Activated CD4-positive, alpha-beta T cell treated with anti-CD3 and anti-CD28 coated beads for 36 hours (primary cell): ENCODE measurements at regions of chr6 and their contacts with region 1.

Region 1: DNA sequence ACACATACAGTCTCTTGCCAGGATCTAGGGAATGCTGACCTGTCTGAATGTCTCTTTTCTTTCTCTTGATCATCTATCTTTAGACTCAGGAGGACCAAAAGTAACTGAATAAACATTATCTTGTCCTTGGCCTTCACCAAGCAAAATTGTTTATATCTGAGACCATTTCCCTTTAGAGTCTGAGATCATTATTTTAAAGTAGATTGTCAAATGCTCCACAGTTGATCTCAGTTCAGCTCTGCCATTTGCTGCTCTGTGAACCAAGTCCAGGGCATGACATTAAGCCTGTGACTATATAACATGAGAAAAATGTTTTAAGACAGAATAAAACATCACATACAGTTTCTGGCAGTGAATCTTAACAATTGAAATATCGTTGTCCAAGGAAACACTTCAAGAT is 148.3 kb upstream of the NRSN1 start:
- DNase-seq: no peak
- ATAC-seq: no peak
- H3K4me3 Mint-ChIP-seq: no peak overlapping the region
- H3K27ac Mint-ChIP-seq: no peak overlapping the region
- H3K4me1 Mint-ChIP-seq: no peaks in the 10 kb centered on the region
- H3K27me3 Mint-ChIP-seq: peaks cover 1% of the 10 kb centered on the region

Region 2: DNA sequence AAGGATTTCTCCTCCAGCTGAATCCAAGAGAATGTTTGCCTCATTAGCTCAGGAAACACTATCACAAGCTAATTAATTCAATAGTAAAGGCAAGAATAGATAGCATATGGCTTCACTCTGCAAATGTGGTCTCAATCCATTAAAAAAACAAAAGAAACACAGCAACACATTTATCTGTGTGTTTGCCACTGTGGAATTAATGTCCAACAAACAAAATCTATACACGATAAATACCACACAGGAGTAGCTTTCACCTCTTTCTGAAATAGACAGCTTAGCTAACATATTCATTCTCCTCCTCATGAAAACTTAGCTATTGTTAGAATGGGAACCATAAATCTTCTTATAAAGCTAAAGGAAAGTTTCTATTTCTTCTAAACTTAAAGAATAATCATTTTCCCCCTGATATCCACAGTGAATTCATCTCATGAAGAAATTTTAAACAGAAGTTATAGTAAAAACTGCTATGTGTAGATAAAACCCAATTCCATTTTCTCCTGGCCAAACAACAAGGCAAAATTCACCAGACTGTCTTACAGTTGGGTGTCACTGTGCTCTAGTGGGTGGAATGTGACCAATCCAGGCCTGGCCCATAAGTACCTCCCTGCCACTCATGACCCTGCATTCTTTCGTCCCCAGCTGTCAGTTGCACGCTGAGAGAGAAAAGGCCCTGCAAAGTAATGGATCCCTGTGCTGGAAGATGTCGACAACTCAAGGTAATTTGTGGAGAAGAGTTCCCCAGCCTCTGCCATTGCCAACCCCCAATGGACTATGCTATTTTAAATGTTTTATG is 55.4 kb after region 1 on chr6:
- CTCF ChIA-PET with region 1: no interaction called
- POLR2A ChIA-PET with region 1: no interaction called
- intact Hi-C with region 1: loop called in 1 of 2 experiments (anchors 10 kb)
- DNase-seq: no peak
- ATAC-seq: no peak
- H3K4me3 Mint-ChIP-seq: no peak overlapping the region
- H3K27ac Mint-ChIP-seq: no peak overlapping the region
- H3K4me1 Mint-ChIP-seq: no peaks in the 10 kb centered on the region
- H3K27me3 Mint-ChIP-seq: no peaks in the 10 kb centered on the region